CD8-positive, alpha-beta T cell (primary cell): ENCODE measurements at regions of chr4 and their contacts with region 1.

Region 1: DNA sequence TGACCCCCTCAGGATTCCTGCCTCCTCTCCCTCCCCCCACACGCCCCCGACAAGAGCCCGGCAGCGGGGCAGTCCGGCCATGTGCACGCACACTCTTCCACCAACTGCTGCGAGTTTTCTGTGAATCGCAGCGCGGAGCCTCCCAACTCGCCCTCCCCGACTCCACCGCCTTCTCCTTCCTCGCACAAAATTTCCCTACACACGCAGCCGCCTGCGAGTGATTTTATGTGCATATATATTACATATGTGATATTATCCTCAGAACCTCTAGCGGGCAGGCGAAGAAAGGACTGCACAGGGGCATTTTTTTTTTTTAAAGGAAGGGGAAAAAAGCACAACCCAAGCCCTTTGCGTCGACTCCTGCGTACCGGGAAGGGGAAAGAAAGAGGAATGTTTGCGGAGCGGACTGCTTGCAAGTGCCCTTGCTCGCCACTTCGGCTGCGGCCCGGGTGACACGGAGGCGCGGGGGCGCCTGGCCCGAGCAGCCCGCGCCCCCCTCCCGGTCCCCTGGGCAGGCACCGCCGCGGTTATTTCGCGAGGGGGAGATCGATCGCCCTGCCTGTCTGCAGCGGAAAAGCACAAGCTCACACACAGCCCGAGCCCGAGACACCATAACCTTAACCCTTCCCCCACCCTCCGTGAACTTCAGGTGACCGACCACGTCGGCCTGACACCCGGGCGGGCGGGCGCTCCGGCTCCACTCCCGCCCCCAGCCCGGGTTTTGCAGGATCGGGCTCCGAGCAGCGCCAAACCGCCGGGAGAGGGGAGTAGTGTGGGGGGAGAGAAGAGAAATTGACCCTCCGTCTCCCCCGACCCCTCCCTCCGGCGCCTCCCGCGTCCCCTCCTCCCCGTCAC is 2.3 kb downstream of the ZNF827 start:
- DNase-seq: peak; percentile 41 to 88 (median 70)
- ATAC-seq: peak; percentile 51
- H3K4me3 ChIP-seq: peak overlapping the region; percentile 83 to 84
- H3K4me3 Mint-ChIP-seq: peak overlapping the region; percentile 94
- H3K27ac ChIP-seq: peak overlapping the region; percentile 58 to 63
- H3K27ac Mint-ChIP-seq: peak overlapping the region; percentile 97
- H3K4me1 ChIP-seq: peaks cover 28% of the 10 kb centered on the region
- H3K4me1 Mint-ChIP-seq: peaks cover 47% of the 10 kb centered on the region
- H3K27me3 ChIP-seq: no peaks in the 10 kb centered on the region
- H3K27me3 Mint-ChIP-seq: no peaks in the 10 kb centered on the region
- CTCF ChIP-seq: peak; percentile 27

Region 2: GRCh38 chr4:145180298-145181090 is 755.9 kb before region 1 on chr4 and contains the start of gene OTUD4:
- CTCF ChIA-PET with region 1: no interaction called
- POLR2A ChIA-PET with region 1: no interaction called
- intact Hi-C with region 1: loop called (anchors 1 to 5 kb)
- DNase-seq: peak; percentile 91 to 98 (median 94)
- ATAC-seq: peak; percentile 82
- H3K4me3 ChIP-seq: peak within 1 kb of the TSS; percentile 69 to 79
- H3K4me3 Mint-ChIP-seq: peak within 1 kb of the TSS; percentile 93
- H3K27ac ChIP-seq: peak within 1 kb of the TSS; percentile 87 to 94
- H3K27ac Mint-ChIP-seq: peak within 1 kb of the TSS; percentile 96
- H3K4me1 ChIP-seq: peaks cover 27% of the 10 kb centered on the region
- H3K4me1 Mint-ChIP-seq: peaks cover 41% of the 10 kb centered on the region
- H3K27me3 ChIP-seq: no peaks in the 10 kb centered on the region
- H3K27me3 Mint-ChIP-seq: no peaks in the 10 kb centered on the region
- CTCF ChIP-seq: no peak
- total RNA-seq, gene OTUD4: 67.5 to 70.6 TPM

Region 3: DNA sequence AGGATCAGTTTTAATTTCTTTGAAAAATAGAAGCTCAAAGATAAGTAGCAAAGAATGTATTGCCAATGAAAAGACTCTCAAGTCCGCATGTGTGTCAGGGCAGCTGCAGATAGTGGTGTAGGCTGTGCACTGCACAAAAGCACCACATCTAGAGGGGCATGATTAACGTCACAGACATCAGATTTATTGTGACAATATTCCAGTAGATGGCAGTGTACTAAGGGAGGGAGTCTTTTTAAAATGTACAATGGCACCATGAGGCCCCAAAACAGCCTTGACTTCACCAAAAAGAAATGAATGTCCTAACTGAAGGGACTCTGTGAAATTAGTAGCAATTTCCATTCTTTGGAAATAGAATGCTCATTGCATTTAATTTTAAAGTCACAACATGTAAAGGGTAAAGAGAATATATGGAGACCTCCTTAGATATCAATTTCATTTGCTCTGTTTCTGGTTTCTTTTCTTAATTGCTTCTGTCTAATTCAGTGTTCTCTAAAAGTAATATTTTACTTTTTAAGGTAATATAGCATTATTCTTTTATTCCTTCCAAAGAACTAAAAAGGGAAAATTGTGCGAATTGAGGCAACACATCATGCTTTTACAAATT is 96.1 kb before region 1 on chr4:
- CTCF ChIA-PET with region 1: no interaction called
- POLR2A ChIA-PET with region 1: no interaction called
- intact Hi-C with region 1: loop called in 1 of 2 experiments (anchors 5 kb)
- DNase-seq: peak in 2 of 9 experiments; percentile 39 to 57
- ATAC-seq: peak; percentile 84
- H3K4me3 ChIP-seq: no peak overlapping the region
- H3K4me3 Mint-ChIP-seq: no peak overlapping the region
- H3K27ac ChIP-seq: no peak overlapping the region
- H3K27ac Mint-ChIP-seq: no peak overlapping the region
- H3K4me1 ChIP-seq: peaks cover 11% of the 10 kb centered on the region
- H3K4me1 Mint-ChIP-seq: peaks cover 24% of the 10 kb centered on the region
- H3K27me3 ChIP-seq: no peaks in the 10 kb centered on the region
- H3K27me3 Mint-ChIP-seq: no peaks in the 10 kb centered on the region
- CTCF ChIP-seq: peak; percentile 31

Region 4: DNA sequence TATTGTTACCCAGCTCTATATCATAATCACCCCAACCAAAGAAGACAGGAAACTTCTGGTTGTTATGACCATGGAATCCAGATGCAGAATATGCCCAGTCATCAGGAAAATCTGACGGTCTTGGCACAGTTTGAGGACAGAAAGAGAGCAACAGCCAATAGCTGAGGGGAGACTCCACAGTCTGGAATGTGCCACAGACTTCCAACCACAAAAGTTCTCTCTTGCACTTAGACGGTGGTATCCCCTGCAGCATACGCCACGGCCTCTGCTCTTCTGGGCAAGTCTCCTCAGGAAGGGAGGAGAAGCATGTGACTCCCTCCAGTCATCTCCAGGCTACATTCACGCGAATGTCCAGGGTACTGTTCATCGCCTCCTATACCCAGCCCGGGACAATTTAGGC is 16.2 kb before region 1 on chr4:
- CTCF ChIA-PET with region 1: no interaction called
- POLR2A ChIA-PET with region 1: interaction called, 3 read pairs
- intact Hi-C with region 1: loop called in 1 of 2 experiments (anchors 2 kb)
- DNase-seq: no peak
- ATAC-seq: no peak
- H3K4me3 ChIP-seq: no peak overlapping the region
- H3K4me3 Mint-ChIP-seq: no peak overlapping the region
- H3K27ac ChIP-seq: no peak overlapping the region
- H3K27ac Mint-ChIP-seq: peak overlapping the region; percentile 23
- H3K4me1 ChIP-seq: peaks cover 9% of the 10 kb centered on the region
- H3K4me1 Mint-ChIP-seq: peaks cover 71% of the 10 kb centered on the region
- H3K27me3 ChIP-seq: no peaks in the 10 kb centered on the region
- H3K27me3 Mint-ChIP-seq: no peaks in the 10 kb centered on the region
- CTCF ChIP-seq: no peak

Region 5: DNA sequence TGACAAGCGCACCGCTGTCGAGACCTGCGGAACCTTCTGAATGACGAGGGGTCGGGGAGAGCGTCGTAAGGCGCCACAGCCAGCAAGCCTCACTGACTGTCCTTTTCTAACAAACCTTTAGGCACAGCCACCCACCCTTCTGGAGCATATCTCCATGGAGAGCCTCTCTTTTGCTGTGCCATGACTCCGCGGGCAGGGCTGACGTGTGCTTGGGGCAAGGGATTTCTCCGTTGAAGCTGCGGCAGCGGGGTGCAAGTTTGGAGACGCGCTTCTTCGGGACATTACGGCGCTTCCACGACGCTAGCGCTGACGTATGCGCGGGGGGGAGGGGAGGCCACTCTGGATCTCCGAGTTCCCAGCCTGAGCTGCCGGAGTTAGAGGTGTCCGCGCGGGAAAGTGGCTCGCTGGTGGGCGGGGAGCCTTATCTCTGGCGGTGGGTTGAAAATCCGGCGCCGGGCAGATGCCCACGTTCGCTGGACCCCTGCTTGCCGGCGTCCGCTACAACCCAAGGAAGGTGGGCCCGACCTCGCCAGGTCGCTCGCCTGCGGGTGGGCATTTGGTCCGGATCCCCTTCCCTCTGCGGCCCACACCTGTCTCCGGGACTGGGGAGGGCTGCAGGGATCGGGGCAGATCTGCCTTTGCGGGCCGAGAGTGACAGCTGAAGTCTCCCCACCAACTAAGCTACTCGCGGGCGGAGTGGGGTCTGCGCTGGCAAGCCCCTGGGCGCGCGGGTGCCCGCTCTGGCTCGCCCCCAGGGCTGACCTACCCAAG is 585.9 kb after region 1 on chr4:
- CTCF ChIA-PET with region 1: no interaction called
- POLR2A ChIA-PET with region 1: interaction called, 4 read pairs
- intact Hi-C with region 1: loop called (anchors 5 to 10 kb)
- DNase-seq: peak; percentile 60 to 90 (median 87)
- ATAC-seq: peak; percentile 82
- H3K4me3 ChIP-seq: peak overlapping the region; percentile 76 to 84
- H3K4me3 Mint-ChIP-seq: no peak overlapping the region
- H3K27ac ChIP-seq: peak overlapping the region; percentile 68 to 71
- H3K27ac Mint-ChIP-seq: no peak overlapping the region
- H3K4me1 ChIP-seq: peaks cover 16% of the 10 kb centered on the region
- H3K4me1 Mint-ChIP-seq: peaks cover 31% of the 10 kb centered on the region
- H3K27me3 ChIP-seq: no peaks in the 10 kb centered on the region
- H3K27me3 Mint-ChIP-seq: no peaks in the 10 kb centered on the region
- CTCF ChIP-seq: no peak